ENCODE measurements at regions of chr2 and their contacts with region 1.

Region 1: DNA sequence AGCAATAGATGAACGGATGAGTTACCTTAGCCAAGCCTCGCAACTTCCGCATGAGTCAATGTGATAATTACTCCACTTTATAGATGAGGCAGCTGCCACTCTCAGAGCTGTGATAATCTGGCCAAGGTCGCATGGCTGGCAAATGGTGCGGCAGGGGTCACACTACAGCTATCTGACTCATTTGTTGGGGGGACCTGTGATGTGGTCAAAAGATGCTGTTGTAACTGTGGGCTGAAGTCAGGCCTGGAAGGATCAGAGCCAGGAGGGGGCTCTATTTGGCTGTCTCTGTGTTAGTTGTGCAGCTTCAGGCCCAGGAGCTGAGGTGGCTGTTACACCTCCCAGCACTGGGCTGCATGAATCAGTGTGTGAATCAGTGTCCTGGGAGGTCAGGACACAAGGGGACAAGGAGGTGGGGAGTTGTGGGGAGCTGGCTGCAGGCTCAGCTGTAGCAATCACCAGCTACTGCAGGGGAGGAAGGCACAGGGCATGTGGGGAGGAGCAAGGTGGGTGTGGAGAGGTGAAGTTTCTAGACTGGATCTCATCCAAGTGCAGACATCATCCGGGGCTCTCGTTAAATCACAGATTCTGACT is 33.1 kb downstream of the NGEF start:
- DNase-seq: no peak

Region 2: DNA sequence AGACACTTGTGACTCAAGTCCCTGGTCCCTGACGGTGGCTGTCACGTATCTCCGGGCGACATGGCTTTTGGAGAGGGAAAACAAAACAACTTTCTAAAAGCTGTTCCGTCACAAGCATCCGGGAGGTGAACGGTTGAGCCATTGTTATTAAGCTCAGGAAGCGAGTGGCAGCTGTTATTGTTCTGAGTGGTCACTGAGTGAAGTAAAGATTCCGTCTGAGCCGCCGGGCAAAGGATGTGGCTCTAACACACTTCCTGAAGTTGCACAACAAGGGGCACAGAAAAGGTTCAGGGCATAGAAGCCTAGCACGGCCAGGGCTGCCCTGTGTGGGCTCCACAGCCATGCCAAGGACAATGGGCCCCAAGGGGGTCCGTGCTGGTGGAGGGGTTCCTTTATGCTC is 104.5 kb after region 1 on chr2:
- in situ Hi-C with region 1: loop called (anchors 10 kb)
- DNase-seq: no peak